ENCODE measurements at regions of chr7 and their contacts with region 1.

Region 1: DNA sequence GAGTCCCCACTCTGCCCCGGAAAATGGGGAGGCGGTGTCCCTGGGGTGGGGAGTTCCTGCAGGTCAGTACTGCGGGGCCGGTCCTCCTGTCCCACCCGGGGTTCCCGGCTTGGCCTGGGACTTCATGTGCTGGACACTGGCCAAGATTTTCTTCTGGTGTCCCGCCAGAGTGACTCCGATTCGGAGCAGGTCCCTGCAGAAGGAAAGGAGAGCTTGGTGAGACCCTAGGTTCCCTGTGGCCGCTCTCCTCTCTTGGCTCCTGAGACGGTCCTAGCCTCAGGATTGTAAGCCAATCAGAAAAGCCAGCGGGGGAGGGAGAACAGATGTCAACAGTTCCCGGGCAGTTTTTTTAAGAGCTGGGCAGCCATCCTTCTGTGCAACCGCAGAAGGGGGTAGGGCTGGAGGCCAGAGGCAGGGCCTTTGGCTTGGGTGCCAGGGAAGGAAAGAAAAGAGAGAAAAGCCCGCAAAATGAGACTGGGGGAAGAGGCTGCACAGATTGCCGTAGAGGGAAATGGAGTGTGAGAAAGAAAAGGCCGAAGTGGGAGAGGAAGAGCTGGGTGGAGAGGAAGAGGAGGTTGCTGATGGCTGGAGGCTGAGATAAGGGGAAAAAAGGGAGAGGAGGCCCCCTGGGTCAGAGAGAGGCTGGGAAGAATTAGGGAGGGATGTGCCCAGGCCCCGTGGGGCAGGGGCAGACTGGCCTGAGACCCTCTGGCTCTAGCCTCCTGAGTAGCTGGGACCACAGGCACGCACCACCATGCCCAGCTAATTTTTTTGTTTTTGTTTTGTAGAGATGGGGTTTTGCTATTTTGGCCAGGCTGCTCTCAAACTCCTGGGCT is 23.7 kb downstream of the EPHB4 start:
- DNase-seq: peak; percentile 84 to 91 (median 87)
- H3K4me3 ChIP-seq: no peak overlapping the region
- H3K27ac ChIP-seq: peak overlapping the region; percentile 49 to 91
- H3K4me1 ChIP-seq: peaks cover 23% of the 10 kb centered on the region
- H3K27me3 ChIP-seq: no peaks in the 10 kb centered on the region
- CTCF ChIP-seq: no peak
- EP300 ChIP-seq: no peak
- POLR2A ChIP-seq: no peak

Region 2: DNA sequence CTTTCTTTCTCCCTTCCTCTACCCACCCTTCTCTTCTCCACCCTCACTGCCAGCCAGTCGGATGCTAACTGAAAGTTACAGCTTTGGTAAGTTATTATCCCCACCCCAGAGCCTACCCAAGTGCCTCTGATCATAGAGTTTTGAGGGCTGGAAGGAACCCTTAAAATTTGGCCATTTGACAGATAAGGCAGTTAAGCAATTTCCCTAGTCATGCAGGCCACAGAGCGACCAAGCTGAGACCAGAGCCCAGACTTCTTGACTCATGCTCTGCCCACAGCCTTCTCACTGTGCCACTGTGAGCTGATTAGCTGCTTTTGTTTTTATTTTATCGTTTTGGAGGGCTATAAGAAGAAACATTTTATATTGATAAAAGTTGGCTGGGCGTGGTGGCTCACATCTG is 247.1 kb before region 1 on chr7:
- intact Hi-C with region 1: no loop called
- DNase-seq: no peak
- H3K4me3 ChIP-seq: no peak overlapping the region
- H3K27ac ChIP-seq: no peak overlapping the region
- H3K4me1 ChIP-seq: no peaks in the 10 kb centered on the region
- H3K27me3 ChIP-seq: no peaks in the 10 kb centered on the region
- CTCF ChIP-seq: no peak
- EP300 ChIP-seq: no peak
- POLR2A ChIP-seq: no peak

Region 3: DNA sequence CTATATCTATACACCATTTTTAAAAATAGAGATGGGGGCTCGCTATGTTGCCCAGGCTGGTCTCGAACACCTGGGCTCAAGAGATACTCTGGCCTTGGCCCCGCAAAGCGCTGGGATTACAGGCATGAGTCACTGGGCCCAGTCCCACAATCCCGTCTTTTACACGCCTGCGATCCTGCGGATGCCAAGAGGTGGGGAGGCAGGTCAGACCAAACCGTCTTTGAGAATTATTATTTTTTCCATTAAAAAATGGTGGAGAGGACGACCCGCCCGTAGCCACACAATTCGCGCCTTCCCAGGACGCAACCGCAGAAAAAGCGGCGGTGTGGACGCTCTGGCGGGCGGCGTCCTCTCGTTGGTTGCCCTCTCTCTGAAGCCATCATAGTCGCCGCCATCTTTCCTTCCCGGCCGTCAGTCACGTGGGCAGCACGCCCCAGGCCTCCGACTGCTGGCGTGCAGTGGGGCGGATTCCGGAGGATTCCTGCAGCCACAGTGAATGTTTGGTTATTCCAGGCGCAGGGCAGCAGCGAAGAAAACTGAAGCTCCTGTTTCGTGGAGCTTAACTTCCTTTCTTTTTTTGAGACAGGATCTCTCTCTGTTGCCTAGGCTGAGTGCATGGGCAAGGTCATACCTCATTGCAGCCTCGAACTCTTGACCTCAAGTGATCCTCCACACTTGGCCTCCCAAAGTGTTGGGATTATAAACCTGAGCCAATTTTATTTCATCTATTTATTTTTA is 33.7 kb after region 1 on chr7:
- intact Hi-C with region 1: loop called in 2 of 4 experiments (anchors 5 kb)
- DNase-seq: peak; percentile 89 to 94 (median 92)
- H3K4me3 ChIP-seq: peak overlapping the region; percentile 40
- H3K27ac ChIP-seq: peak overlapping the region in 1 of 2 donors; percentile 69
- H3K4me1 ChIP-seq: peaks cover 3% of the 10 kb centered on the region
- H3K27me3 ChIP-seq: no peaks in the 10 kb centered on the region
- CTCF ChIP-seq: no peak
- EP300 ChIP-seq: no peak
- POLR2A ChIP-seq: peak; percentile 50

Region 4: GRCh38 chr7:100852048-100852872 is 48.6 kb after region 1 on chr7 and contains the start of gene SLC12A9:
- intact Hi-C with region 1: loop called (anchors 2 to 10 kb)
- DNase-seq: peak; percentile 87 to 93 (median 90)
- H3K4me3 ChIP-seq: peak within 1 kb of the TSS; percentile 48
- H3K27ac ChIP-seq: peak within 1 kb of the TSS in 1 of 2 donors; percentile 66
- H3K4me1 ChIP-seq: no peaks in the 10 kb centered on the region
- H3K27me3 ChIP-seq: no peaks in the 10 kb centered on the region
- CTCF ChIP-seq: peak; percentile 94 to 95 (median 94)
- EP300 ChIP-seq: no peak
- POLR2A ChIP-seq: no peak
- total RNA-seq, gene SLC12A9: 10.1 to 31.8 (median 26.9) TPM

Region 5: DNA sequence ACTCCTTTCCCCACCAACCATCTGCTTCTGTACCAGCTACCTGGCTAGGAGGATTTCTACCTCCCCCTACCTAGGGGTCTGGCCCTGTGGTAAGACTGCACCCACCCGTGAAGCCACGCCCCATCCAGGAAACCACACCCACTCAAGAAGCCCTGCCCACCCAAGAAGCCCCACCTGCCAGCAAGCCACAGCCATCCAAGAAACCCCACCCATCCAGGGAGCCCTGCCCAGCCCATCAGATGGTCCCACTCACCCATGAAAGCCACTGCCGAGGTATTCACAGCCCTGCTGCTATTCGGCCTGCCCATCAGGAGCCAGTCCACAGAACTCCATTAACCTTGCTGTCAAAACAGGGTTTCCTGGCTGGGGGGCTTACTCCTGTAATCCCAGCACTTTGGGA is 130.1 kb after region 1 on chr7:
- intact Hi-C with region 1: no loop called
- DNase-seq: no peak
- H3K4me3 ChIP-seq: no peak overlapping the region
- H3K27ac ChIP-seq: no peak overlapping the region
- H3K4me1 ChIP-seq: no peaks in the 10 kb centered on the region
- H3K27me3 ChIP-seq: no peaks in the 10 kb centered on the region
- CTCF ChIP-seq: no peak
- EP300 ChIP-seq: no peak
- POLR2A ChIP-seq: no peak

Region 6: DNA sequence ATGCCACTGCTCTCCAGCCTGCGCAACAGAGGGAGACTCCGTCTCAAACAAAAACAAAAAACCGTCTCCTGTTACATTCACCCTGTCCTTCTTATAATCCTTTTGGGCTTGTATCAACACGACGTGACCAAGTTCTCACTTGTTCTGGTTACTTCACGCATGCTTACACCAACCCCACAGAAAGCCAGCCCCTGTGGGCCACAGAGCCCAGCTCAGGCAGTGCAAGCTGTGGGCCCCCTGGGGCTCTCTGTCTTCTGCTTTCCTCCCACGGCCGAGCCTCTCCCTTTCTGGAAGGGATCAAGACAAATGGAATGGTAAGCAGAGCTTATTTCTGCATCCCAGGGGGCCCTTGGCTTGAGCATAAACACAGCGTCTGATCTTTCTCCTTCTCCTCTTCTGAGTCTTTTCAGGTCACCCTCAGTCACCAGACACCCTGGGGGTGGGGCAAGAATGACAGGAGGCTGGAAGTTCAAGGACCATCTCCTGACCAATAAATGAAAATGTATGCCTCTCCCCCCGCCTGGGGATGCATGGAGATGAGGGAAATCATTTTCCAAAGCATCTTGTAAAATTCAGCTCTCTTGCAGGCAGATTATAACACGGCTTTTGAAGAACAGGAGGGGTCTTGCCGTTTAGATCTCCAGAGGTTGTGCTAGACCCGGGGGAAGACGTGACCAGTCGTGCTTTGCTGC is 262.7 kb after region 1 on chr7:
- intact Hi-C with region 1: loop called in 1 of 4 experiments (anchors 10 kb)
- DNase-seq: peak in 1 of 5 donors; percentile 38
- H3K4me3 ChIP-seq: no peak overlapping the region
- H3K27ac ChIP-seq: no peak overlapping the region
- H3K4me1 ChIP-seq: no peaks in the 10 kb centered on the region
- H3K27me3 ChIP-seq: no peaks in the 10 kb centered on the region
- CTCF ChIP-seq: no peak
- EP300 ChIP-seq: no peak
- POLR2A ChIP-seq: no peak

Measured in ovary (tissue), 10 donors.